Endothelial cell of umbilical vein (primary cell): ENCODE measurements at regions of chr7 and their contacts with region 1.

Region 1: DNA sequence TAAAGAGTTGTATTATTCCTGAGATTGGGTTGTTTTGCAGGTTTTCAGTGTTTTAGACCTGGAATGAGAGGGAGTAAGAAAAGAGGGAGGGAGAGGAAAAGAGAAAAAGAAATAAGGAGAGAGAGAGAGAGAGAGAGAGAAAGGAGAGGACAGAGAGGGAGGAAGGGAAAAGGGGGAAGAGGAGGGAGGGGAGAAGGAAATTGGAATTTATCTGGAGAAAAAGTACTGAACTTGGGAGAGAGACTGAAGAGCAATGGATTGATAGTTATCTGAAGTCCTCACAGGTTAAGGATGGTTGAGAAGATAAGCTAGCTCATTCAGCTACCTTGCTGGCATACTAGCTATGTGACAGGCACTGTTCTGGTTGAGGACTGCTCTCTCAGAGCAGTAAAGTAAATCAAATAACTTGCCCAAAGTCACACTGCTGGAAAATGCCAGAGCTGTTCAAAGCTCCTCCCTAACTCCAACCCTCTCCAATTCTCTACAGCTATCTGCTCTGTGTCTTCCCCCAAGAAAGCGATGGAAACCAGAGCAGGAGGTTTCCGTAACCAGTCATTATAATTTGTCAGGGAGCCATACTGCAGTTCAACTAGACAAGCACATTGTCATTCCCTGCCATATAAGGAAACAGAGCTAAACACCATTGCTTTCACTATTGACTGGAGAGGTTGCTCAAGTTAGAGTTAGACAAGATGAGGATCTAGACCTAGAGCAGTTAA is 10.7 kb downstream of the CALD1 start:
- DNase-seq: no peak
- H3K4me3 ChIP-seq: no peak overlapping the region
- H3K27ac ChIP-seq: no peak overlapping the region
- H3K4me1 ChIP-seq: peaks cover 23% of the 10 kb centered on the region
- H3K27me3 ChIP-seq: no peaks in the 10 kb centered on the region
- CTCF ChIP-seq: no peak
- POLR2A ChIP-seq: no peak

Region 2: DNA sequence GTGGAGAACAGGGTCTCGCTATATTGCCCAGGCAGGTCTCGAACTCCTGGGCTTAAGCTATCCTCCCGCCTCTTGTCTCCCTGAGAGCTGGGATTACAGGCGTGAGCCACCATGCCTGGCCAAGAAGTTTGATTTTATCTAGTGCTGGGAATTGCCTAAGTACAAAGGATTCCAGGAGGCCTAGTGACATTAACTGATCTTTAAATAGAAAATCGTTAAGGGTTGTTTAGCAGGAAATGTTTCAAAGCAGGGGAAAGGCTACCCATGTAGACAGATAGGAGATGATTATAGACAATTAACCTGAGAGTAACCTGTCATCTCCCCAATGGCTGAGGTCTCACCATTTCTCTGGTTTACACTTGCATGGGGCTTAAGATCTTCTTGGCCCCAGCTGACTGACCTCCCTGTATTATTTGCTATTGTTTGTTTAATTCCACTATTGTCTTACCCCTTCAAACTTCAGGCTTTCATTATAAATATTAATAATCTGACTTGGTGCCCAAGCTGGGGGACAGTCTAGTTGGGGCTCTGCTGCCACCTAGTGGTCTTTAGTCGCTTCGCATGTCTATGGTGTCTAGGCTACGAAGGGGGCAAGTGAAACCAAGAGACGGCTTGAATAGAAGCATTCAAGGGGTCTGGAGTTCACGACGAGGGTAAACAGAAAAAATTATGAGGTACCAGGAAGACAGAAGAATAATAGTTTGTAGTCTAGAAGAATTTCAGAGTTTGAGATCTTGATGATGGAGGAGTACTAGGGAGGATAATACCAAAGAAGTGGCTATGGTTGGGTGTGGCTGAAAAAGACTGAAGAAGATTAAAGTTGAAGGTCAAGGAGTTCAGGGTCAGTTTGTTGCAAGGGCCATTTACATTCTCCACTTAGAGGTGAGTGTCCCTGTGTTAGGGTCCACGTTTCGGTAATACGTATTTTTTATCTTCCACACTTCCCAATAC is 183.9 kb before region 1 on chr7:
- CTCF ChIA-PET with region 1: no interaction called
- POLR2A ChIA-PET with region 1: no interaction called
- dilution Hi-C with region 1: no loop called
- intact Hi-C with region 1: no loop called
- DNase-seq: peak; percentile 80
- H3K4me3 ChIP-seq: no peak overlapping the region
- H3K27ac ChIP-seq: no peak overlapping the region
- H3K4me1 ChIP-seq: peaks cover 10% of the 10 kb centered on the region
- H3K27me3 ChIP-seq: no peaks in the 10 kb centered on the region
- CTCF ChIP-seq: peak; percentile 81 to 86
- POLR2A ChIP-seq: no peak

Region 3: DNA sequence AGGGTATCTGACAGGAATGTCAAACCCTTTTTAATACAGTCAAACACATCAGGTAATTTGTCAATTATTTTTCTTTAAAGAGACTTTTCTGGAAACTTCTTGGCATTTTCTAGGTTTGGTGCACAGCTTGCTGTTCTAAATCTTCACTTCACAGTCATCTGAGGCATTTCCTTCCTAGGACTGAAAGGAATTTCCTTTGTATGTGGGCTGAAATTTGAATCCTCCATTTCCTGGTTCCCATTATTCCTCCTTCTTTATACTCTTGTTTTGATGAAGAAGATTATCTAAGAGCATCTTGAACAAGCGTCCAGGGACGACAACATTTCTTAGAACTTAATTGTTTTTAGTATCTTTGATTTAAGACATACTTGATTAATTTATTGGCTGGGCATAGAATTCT is 14.2 kb after region 1 on chr7:
- CTCF ChIA-PET with region 1: interaction called, 7 read pairs
- POLR2A ChIA-PET with region 1: interaction called, 8 read pairs
- dilution Hi-C with region 1: no loop called
- intact Hi-C with region 1: loop called (anchors 1 kb)
- DNase-seq: peak; percentile 85
- H3K4me3 ChIP-seq: peak overlapping the region in 1 of 3 experiments; percentile 35
- H3K27ac ChIP-seq: peak overlapping the region; percentile 96
- H3K4me1 ChIP-seq: peaks cover 49% of the 10 kb centered on the region
- H3K27me3 ChIP-seq: no peaks in the 10 kb centered on the region
- CTCF ChIP-seq: no peak
- POLR2A ChIP-seq: no peak

Region 4: GRCh38 chr7:134811765-134812164 is 21.6 kb after region 1 on chr7:
- CTCF ChIA-PET with region 1: no interaction called
- POLR2A ChIA-PET with region 1: interaction called, 45 read pairs
- dilution Hi-C with region 1: no loop called
- intact Hi-C with region 1: loop called (anchors 1 kb)
- DNase-seq: peak; percentile 62
- H3K4me3 ChIP-seq: no peak overlapping the region
- H3K27ac ChIP-seq: peak overlapping the region; percentile 34
- H3K4me1 ChIP-seq: peaks cover 46% of the 10 kb centered on the region
- H3K27me3 ChIP-seq: no peaks in the 10 kb centered on the region
- CTCF ChIP-seq: no peak
- POLR2A ChIP-seq: no peak

Region 5: GRCh38 chr7:134927723-134928122 is 137.6 kb after region 1 on chr7:
- CTCF ChIA-PET with region 1: no interaction called
- POLR2A ChIA-PET with region 1: interaction called, 11 read pairs
- dilution Hi-C with region 1: no loop called
- intact Hi-C with region 1: no loop called
- DNase-seq: no peak
- H3K4me3 ChIP-seq: no peak overlapping the region
- H3K27ac ChIP-seq: no peak overlapping the region
- H3K4me1 ChIP-seq: peaks cover 7% of the 10 kb centered on the region
- H3K27me3 ChIP-seq: no peaks in the 10 kb centered on the region
- CTCF ChIP-seq: no peak
- POLR2A ChIP-seq: no peak

Region 6: GRCh38 chr7:134943764-134944400 is 153.8 kb after region 1 on chr7:
- CTCF ChIA-PET with region 1: no interaction called
- POLR2A ChIA-PET with region 1: no interaction called
- dilution Hi-C with region 1: no loop called
- intact Hi-C with region 1: no loop called
- DNase-seq: peak; percentile 55
- H3K4me3 ChIP-seq: no peak overlapping the region
- H3K27ac ChIP-seq: no peak overlapping the region
- H3K4me1 ChIP-seq: peaks cover 11% of the 10 kb centered on the region
- H3K27me3 ChIP-seq: no peaks in the 10 kb centered on the region
- CTCF ChIP-seq: peak; percentile 13 to 21
- POLR2A ChIP-seq: no peak